T-cell (primary cell): ENCODE measurements at regions of chr16 and their contacts with region 1.

Region 1: GRCh38 chr16:88669980-88670379 is 7.1 kb upstream of the MVD start:
- DNase-seq: no peak
- ATAC-seq: no peak
- H3K4me3 ChIP-seq: no peak overlapping the region
- H3K4me3 Mint-ChIP-seq: no peak overlapping the region
- H3K27ac ChIP-seq: no peak overlapping the region
- H3K27ac Mint-ChIP-seq: no peak overlapping the region
- H3K4me1 ChIP-seq: no peaks in the 10 kb centered on the region
- H3K4me1 Mint-ChIP-seq: peaks cover 0 to 4% (median 1%) of the 10 kb centered on the region in 3 donors
- H3K27me3 ChIP-seq: no peaks in the 10 kb centered on the region
- H3K27me3 Mint-ChIP-seq: no peaks in the 10 kb centered on the region

Region 2: GRCh38 chr16:88639231-88640038 is 30.5 kb before region 1 on chr16:
- CTCF ChIA-PET with region 1: no interaction called
- POLR2A ChIA-PET with region 1: no interaction called
- DNase-seq: no peak
- ATAC-seq: peak in 3 of 4 experiments; percentile 10 to 21 (median 17)
- H3K4me3 ChIP-seq: peak overlapping the region in 1 of 2 donors; percentile 12
- H3K4me3 Mint-ChIP-seq: peak overlapping the region in 1 of 3 donors; percentile 52
- H3K27ac ChIP-seq: no peak overlapping the region
- H3K27ac Mint-ChIP-seq: no peak overlapping the region
- H3K4me1 ChIP-seq: peaks cover 10 to 70% of the 10 kb centered on the region in 2 experiments
- H3K4me1 Mint-ChIP-seq: peaks cover 33 to 50% (median 42%) of the 10 kb centered on the region in 3 donors
- H3K27me3 ChIP-seq: peaks cover 0 to 58% of the 10 kb centered on the region in 2 experiments
- H3K27me3 Mint-ChIP-seq: peaks cover 8 to 17% of the 10 kb centered on the region in 2 donors

Region 3: GRCh38 chr16:88681709-88682451 is 11.9 kb after region 1 on chr16:
- CTCF ChIA-PET with region 1: no interaction called
- POLR2A ChIA-PET with region 1: interaction called in 1 of 2 experiments, 14 read pairs
- DNase-seq: peak in 30 of 35 experiments; percentile 44 to 77 (median 56)
- ATAC-seq: peak; percentile 50 to 58 (median 54)
- H3K4me3 ChIP-seq: peak overlapping the region; percentile 17 to 26
- H3K4me3 Mint-ChIP-seq: peak overlapping the region; percentile 59 to 72 (median 65)
- H3K27ac ChIP-seq: peak overlapping the region; percentile 70
- H3K27ac Mint-ChIP-seq: peak overlapping the region; percentile 94 to 97
- H3K4me1 ChIP-seq: peaks cover 18 to 69% of the 10 kb centered on the region in 2 experiments
- H3K4me1 Mint-ChIP-seq: peaks cover 40 to 45% (median 44%) of the 10 kb centered on the region in 3 donors
- H3K27me3 ChIP-seq: peaks cover 0 to 3% of the 10 kb centered on the region in 2 experiments
- H3K27me3 Mint-ChIP-seq: no peaks in the 10 kb centered on the region